ENCODE measurements at regions of chr2 and their contacts with region 1.

Region 1: DNA sequence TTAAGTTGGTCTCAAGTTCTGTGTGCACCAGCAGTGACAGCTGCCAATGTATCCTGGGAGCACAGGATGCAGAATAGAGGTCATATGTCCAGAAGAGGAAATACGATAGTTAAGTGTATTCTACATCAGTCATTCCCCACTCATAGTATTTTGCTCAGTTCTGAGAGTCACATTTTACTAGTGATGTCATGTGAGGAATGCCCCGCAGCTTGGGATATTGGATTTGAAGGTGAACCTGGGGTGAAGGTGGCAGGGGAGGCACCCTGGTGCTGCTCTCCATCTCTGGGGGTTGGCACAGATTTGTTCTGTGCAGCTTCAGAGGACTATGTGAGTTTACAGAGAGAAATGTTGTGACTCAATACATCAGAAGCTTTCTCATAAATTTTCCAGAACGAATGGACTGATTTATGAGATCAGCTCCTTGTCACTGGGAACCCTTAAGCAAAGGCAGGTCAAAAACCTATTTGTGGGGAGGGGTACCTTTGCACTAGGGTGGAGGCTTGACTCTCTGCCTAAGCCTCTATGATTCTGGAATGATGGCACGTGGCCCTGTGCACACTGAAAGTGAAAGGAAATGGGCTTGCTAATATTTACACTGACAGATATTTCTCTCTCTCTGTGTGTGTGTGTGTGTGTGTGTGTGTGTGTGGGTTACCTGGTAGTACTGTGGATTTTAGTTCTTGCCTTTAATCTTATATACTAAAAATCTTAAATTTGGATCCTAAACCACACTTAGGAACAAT is 95.9 kb downstream of the NEB start:
- DNase-seq: no peak
- ATAC-seq: peak; percentile 25
- H3K4me3 Mint-ChIP-seq: peak overlapping the region; percentile 56
- H3K27ac Mint-ChIP-seq: peak overlapping the region; percentile 84
- H3K4me1 Mint-ChIP-seq: peaks cover 32% of the 10 kb centered on the region
- H3K27me3 Mint-ChIP-seq: no peaks in the 10 kb centered on the region
- CTCF ChIP-seq: no peak

Region 2: GRCh38 chr2:151669585-151670081 is 31.3 kb after region 1 on chr2:
- CTCF ChIA-PET with region 1: interaction called, 3 read pairs
- POLR2A ChIA-PET with region 1: no interaction called
- intact Hi-C with region 1: loop called (anchors 5 kb)
- DNase-seq: no peak
- ATAC-seq: no peak
- H3K4me3 Mint-ChIP-seq: no peak overlapping the region
- H3K27ac Mint-ChIP-seq: no peak overlapping the region
- H3K4me1 Mint-ChIP-seq: peaks cover 11% of the 10 kb centered on the region
- H3K27me3 Mint-ChIP-seq: peaks cover 2% of the 10 kb centered on the region
- CTCF ChIP-seq: no peak

Region 3: GRCh38 chr2:151730262-151730975 is 92.1 kb after region 1 on chr2:
- CTCF ChIA-PET with region 1: no interaction called
- POLR2A ChIA-PET with region 1: no interaction called
- intact Hi-C with region 1: loop called (anchors 2 kb)
- DNase-seq: no peak
- ATAC-seq: peak; percentile 38
- H3K4me3 Mint-ChIP-seq: peak overlapping the region; percentile 39
- H3K27ac Mint-ChIP-seq: peak overlapping the region; percentile 67
- H3K4me1 Mint-ChIP-seq: peaks cover 36% of the 10 kb centered on the region
- H3K27me3 Mint-ChIP-seq: no peaks in the 10 kb centered on the region
- CTCF ChIP-seq: no peak

Region 4: DNA sequence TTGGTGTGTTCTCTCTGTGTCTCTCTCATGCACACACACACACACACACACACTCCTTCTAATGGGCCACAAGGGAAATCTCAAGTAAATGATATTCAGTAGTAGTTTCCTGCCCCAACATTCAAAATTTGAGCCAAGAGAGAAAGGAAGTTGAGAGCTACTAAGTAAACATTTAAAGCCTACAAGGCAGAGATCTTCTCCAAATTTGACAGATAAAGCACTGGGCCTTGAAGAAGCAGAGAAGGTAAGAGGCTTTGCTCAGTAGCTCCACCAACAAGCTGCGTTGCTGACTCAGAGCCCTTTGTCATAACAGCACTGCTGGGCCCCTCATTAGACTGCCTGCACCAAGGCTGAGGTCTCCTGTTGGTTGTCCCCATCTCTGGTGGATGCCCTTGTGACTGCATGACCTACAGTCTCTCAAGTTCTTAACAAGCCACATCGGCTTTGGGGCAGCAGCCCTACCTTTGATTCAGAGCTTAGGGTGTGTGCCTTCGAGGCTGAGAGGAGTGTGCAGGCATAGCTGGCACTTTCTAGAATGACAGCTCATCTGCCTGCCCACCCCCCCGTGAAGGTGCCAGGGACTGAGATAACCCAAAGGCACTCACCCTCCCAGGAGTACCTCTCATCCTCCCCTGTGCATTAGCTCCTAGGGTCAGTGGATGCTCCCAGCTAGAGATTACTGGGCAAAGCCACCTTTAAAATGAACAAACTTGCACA is 128.2 kb after region 1 on chr2:
- CTCF ChIA-PET with region 1: no interaction called
- POLR2A ChIA-PET with region 1: interaction called, 30 read pairs
- intact Hi-C with region 1: loop called (anchors 1 kb)
- DNase-seq: peak; percentile 47
- ATAC-seq: peak; percentile 71
- H3K4me3 Mint-ChIP-seq: peak overlapping the region; percentile 56
- H3K27ac Mint-ChIP-seq: peak overlapping the region; percentile 95
- H3K4me1 Mint-ChIP-seq: peaks cover 90% of the 10 kb centered on the region
- H3K27me3 Mint-ChIP-seq: no peaks in the 10 kb centered on the region
- CTCF ChIP-seq: no peak

Region 5: DNA sequence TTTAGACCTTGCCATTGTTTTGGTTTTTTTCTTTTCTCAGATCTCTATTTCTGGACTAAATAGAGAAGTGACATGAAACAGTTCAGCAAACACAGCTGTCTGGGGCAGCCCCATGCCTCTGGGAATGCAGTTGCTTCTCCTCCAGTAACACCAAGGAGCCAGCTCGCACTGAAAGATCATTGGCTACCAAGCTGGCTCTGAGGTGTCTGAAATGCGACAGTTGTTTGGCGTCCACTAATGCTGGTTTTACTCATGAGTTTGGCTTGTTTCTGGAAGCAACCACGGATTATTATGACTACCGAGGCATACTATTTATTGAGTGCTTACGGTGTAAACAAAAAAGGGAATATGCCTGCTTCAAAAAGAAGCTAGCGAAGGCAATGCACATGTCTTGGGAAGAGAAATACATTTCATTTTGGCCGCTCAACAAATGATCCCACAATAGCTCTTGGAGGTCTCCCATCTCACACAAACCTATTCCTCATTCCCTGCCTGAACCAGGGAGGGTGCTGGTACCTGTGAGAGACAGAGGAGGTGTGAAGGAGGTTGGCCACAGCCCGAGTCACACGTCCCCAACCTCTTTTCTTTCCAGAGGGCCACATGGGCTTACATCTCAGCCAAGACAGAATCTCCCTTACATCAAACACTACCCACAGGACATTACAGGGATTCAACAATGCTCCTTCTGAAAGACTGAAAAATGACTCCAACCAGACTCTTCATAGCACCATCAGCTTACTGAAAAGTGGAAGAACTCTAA is 133.4 kb after region 1 on chr2:
- CTCF ChIA-PET with region 1: no interaction called
- POLR2A ChIA-PET with region 1: interaction called, 30 read pairs
- intact Hi-C with region 1: loop called (anchors 1 kb)
- DNase-seq: peak; percentile 66
- ATAC-seq: peak; percentile 82
- H3K4me3 Mint-ChIP-seq: peak overlapping the region; percentile 60
- H3K27ac Mint-ChIP-seq: peak overlapping the region; percentile 98
- H3K4me1 Mint-ChIP-seq: peaks cover 94% of the 10 kb centered on the region
- H3K27me3 Mint-ChIP-seq: no peaks in the 10 kb centered on the region
- CTCF ChIP-seq: no peak

Region 6: DNA sequence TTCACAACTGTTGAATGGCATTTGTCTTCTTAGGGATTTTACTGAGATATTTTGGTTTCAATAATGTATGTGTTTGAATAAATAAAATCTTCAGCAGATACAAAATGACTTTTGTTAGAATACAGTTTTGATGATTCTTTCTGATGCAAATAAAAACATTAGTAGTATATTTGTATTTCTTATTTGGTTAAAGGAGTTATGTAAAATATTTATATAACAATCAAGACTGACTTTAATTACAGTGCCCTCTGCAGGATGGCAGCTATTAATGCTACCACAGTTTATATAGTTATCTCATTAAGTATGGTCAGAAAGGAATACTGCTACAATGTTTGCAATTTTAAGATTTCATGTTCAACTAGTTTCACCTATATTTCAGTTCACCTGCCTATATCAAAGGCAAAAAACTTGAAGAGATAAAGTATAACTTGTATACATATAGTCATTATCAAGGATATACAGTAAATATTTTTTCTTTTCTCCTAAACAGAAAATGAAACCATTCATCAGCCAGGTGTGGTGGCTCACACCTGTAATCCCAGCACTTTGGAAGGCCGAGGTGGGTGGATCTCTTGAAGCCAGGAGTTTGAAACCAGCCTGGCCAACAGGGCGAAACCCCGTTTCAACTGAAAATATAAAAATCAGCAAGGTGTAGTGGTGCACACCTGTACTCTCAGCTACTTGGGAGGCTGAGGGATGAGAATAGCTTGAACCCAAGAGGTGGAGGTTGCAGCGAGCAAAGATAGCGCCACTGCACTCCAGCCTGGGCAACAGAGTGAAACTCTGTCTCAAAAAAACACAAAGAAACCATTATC is 170.1 kb after region 1 on chr2:
- CTCF ChIA-PET with region 1: no interaction called
- POLR2A ChIA-PET with region 1: no interaction called
- intact Hi-C with region 1: loop called (anchors 1 kb)
- DNase-seq: no peak
- ATAC-seq: peak; percentile 60
- H3K4me3 Mint-ChIP-seq: no peak overlapping the region
- H3K27ac Mint-ChIP-seq: no peak overlapping the region
- H3K4me1 Mint-ChIP-seq: peaks cover 4% of the 10 kb centered on the region
- H3K27me3 Mint-ChIP-seq: no peaks in the 10 kb centered on the region
- CTCF ChIP-seq: peak; percentile 20

Region 7: DNA sequence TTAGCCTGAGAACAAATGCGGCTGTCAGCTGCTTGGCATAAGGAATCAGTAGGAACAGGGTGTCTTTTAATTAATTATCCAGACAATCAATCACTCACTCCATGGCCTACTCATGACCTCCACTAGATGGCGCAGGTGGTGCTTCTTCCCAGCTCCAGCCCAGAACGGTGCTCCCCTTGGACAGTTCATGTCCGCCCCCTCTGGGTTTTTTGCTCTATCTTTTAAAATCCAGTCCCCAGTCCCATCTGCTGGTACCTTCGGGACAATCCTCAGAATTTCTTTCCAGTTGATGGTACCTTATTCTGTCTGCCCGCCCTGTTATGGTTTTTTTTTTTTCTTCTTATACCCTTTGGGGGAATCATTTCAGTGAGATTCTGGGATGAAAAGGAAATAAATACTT is 360.7 kb after region 1 on chr2:
- CTCF ChIA-PET with region 1: no interaction called
- POLR2A ChIA-PET with region 1: no interaction called
- intact Hi-C with region 1: loop called (anchors 5 kb)
- DNase-seq: peak; percentile 18
- ATAC-seq: peak; percentile 58
- H3K4me3 Mint-ChIP-seq: no peak overlapping the region
- H3K27ac Mint-ChIP-seq: no peak overlapping the region
- H3K4me1 Mint-ChIP-seq: peaks cover under 1% of the 10 kb centered on the region
- H3K27me3 Mint-ChIP-seq: no peaks in the 10 kb centered on the region
- CTCF ChIP-seq: peak; percentile 52

Measured in activated B cell treated with CpG ODN at 0.5 μM for 24 hours (primary cell).